H1 (cell line): ENCODE measurements at regions of chr19 and their contacts with region 1.

Region 1: GRCh38 chr19:47348819-47349795 is at the start of gene DHX34:
- DNase-seq: peak; percentile 99 to 100
- H3K4me3 ChIP-seq: peak within 1 kb of the TSS; percentile 71 to 95 (median 86)
- H3K27ac ChIP-seq: 0 out of 2 replicates have a peak within 1 kb of the TSS, but pooled peaks have one; percentile 25
- H3K4me1 ChIP-seq: peaks cover 0 to 7% (median 2%) of the 10 kb centered on the region in 4 experiments; a peak in 4 of 7 replicates
- H3K27me3 ChIP-seq: peaks cover 0 to 3% (median 0%) of the 10 kb centered on the region in 4 experiments; a peak in 2 of 7 replicates
- CTCF ChIP-seq: peak; percentile 85 to 99 (median 92)
- EP300 ChIP-seq: 0 out of 3 replicates have a peak, but pooled peaks of 1 of the 2 experiments have one; percentile 13
- POLR2A ChIP-seq: peak in 1 of 2 experiments; percentile 69; a peak in 2 of 3 replicates
- RAD21 ChIP-seq: peak in 1 of 2 experiments; percentile 37; a peak in 2 of 4 replicates
- total RNA-seq, gene DHX34: 24.1 and 24.3 TPM in 2 replicates

Region 2: DNA sequence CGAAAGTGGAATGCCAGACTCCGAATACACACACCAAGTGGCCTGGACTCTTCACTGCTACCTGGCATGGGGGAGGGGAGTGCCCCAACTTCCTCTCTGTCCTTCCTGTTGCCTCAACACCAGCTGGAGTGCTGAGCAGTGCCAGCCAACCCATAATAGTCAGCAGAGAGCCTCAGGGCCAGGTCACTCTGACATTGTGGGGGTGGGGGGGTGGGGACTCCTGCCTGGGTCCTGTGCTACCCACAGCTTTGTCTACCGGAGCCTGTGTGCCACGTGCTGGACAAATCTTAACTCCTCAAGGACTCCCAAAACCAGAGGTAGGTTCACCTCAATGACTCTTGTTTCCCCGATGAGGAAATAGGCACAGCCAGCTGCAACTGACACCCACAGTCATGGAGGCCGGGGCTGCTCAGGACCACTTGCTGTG is 12.2 kb before region 1 on chr19:
- CTCF ChIA-PET with region 1: interaction called, 19 read pairs
- POLR2A ChIA-PET with region 1: interaction called, 5 read pairs
- DNase-seq: no peak
- H3K4me3 ChIP-seq: no peak overlapping the region
- H3K27ac ChIP-seq: no peak overlapping the region
- H3K4me1 ChIP-seq: peaks cover 0 to 3% (median 0%) of the 10 kb centered on the region in 4 experiments; a peak in 1 of 7 replicates
- H3K27me3 ChIP-seq: no peaks in the 10 kb centered on the region
- CTCF ChIP-seq: no peak
- EP300 ChIP-seq: no peak
- POLR2A ChIP-seq: no peak
- RAD21 ChIP-seq: no peak

Region 3: GRCh38 chr19:47381653-47382279 is 32.7 kb after region 1 on chr19:
- CTCF ChIA-PET with region 1: interaction called, 10 read pairs
- POLR2A ChIA-PET with region 1: interaction called, 4 read pairs
- DNase-seq: no peak
- H3K4me3 ChIP-seq: no peak overlapping the region
- H3K27ac ChIP-seq: no peak overlapping the region
- H3K4me1 ChIP-seq: no peaks in the 10 kb centered on the region
- H3K27me3 ChIP-seq: no peaks in the 10 kb centered on the region; a peak in 1 of 7 replicates
- CTCF ChIP-seq: no peak
- EP300 ChIP-seq: no peak
- POLR2A ChIP-seq: no peak
- RAD21 ChIP-seq: no peak

Region 4: DNA sequence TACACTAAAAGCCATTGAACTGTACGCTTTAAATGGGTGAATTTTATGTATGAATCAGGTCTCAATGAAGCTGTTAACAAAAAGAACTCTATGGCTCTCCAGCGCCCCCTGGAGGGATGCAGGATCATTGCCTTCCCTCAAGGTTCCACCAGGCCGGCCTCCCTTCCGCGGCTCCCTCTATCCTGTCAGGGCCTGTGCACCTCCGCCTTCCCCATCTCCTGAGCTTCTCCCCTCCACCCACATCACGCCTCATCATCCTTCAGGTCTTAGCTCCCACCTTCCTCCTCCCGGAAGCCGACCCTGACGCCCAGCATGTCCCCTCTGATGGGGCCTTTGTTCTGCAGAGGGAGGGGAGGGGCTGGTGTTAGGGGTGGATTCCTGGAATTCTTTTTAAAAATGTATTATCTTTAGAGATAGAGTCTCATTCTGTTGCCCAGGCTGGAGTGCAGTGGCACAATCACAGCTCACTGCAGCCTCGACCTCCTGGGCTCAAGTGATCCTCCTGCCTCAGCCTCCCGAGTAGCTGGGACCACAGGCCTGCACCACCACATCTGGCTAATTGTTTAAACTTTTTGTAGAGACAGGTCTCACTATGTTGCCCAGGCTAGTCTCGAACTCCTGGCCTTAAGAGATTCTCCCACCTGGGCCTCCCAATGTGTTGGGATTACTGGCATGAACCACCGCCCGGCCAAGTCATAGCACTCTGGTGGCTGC is 42.6 kb after region 1 on chr19:
- CTCF ChIA-PET with region 1: interaction called, 13 read pairs
- POLR2A ChIA-PET with region 1: interaction called, 4 read pairs
- DNase-seq: peak; percentile 89 to 97
- H3K4me3 ChIP-seq: no peak overlapping the region
- H3K27ac ChIP-seq: no peak overlapping the region
- H3K4me1 ChIP-seq: peaks cover 0 to 3% (median 0%) of the 10 kb centered on the region in 4 experiments; a peak in 4 of 7 replicates
- H3K27me3 ChIP-seq: no peaks in the 10 kb centered on the region
- CTCF ChIP-seq: peak; percentile 71 to 92 (median 76)
- EP300 ChIP-seq: peak in 1 of 2 experiments; percentile 90; a peak in 2 of 3 replicates
- POLR2A ChIP-seq: peak in 1 of 2 experiments; percentile 54; a peak in 2 of 3 replicates
- RAD21 ChIP-seq: peak; percentile 65 to 68